ENCODE measurements at regions of chr15 and their contacts with region 1.

Region 1: GRCh38 chr15:68252925-68253534 is 23.5 kb upstream of the CLN6 start:
- DNase-seq: no peak
- ATAC-seq: peak; percentile 51

Region 2: GRCh38 chr15:68304589-68305337 is 51.7 kb after region 1 on chr15:
- intact Hi-C with region 1: loop called in 1 of 2 experiments (anchors 2 kb)
- DNase-seq: no peak
- ATAC-seq: no peak

Region 3: GRCh38 chr15:68383161-68384074 is 130.4 kb after region 1 on chr15:
- intact Hi-C with region 1: loop called in 1 of 2 experiments (anchors 10 kb)
- DNase-seq: no peak
- ATAC-seq: peak; percentile 62